PC-9 (cell line): ENCODE measurements at regions of chr17 and their contacts with region 1.

Region 1: GRCh38 chr17:4903051-4903818 is at the start of gene CHRNE:
- DNase-seq: peak; percentile 62 to 83
- H3K4me3 ChIP-seq: no peak within 1 kb of the TSS
- H3K27ac ChIP-seq: 0 out of 2 replicates have a peak within 1 kb of the TSS, but pooled peaks have one; percentile 7
- H3K4me1 ChIP-seq: peaks cover 13% of the 10 kb centered on the region
- H3K27me3 ChIP-seq: no peaks in the 10 kb centered on the region
- CTCF ChIP-seq: peak; percentile 94
- total RNA-seq, gene CHRNE: 0.23 and 0.24 TPM in 2 replicates

Region 2: GRCh38 chr17:4733073-4733531 is 170.1 kb before region 1 on chr17:
- CTCF ChIA-PET with region 1: no interaction called
- POLR2A ChIA-PET with region 1: no interaction called
- intact Hi-C with region 1: loop called (anchors 1 kb)
- DNase-seq: no peak
- H3K4me3 ChIP-seq: no peak overlapping the region
- H3K27ac ChIP-seq: no peak overlapping the region
- H3K4me1 ChIP-seq: peaks cover 10% of the 10 kb centered on the region; the same call in 1 of the 2 replicates
- H3K27me3 ChIP-seq: no peaks in the 10 kb centered on the region
- CTCF ChIP-seq: no peak

Region 3: GRCh38 chr17:4858882-4859260 is 44.4 kb before region 1 on chr17:
- CTCF ChIA-PET with region 1: no interaction called
- POLR2A ChIA-PET with region 1: no interaction called
- intact Hi-C with region 1: no loop called
- DNase-seq: peak; percentile 59 to 84
- H3K4me3 ChIP-seq: no peak overlapping the region
- H3K27ac ChIP-seq: peak overlapping the region; percentile 37
- H3K4me1 ChIP-seq: peaks cover 20% of the 10 kb centered on the region
- H3K27me3 ChIP-seq: no peaks in the 10 kb centered on the region
- CTCF ChIP-seq: no peak

Region 4: GRCh38 chr17:4986951-4987766 is 83.9 kb after region 1 on chr17 and contains the start of gene CAMTA2:
- CTCF ChIA-PET with region 1: no interaction called
- POLR2A ChIA-PET with region 1: no interaction called
- intact Hi-C with region 1: loop called (anchors 1 kb)
- DNase-seq: peak; percentile 57 to 82
- H3K4me3 ChIP-seq: peak within 1 kb of the TSS; percentile 95
- H3K27ac ChIP-seq: peak within 1 kb of the TSS; percentile 25
- H3K4me1 ChIP-seq: peaks cover 23% of the 10 kb centered on the region
- H3K27me3 ChIP-seq: no peaks in the 10 kb centered on the region
- CTCF ChIP-seq: peak; percentile 79
- total RNA-seq, gene CAMTA2: 49.2 and 51.1 TPM in 2 replicates